A673 (cell line): ENCODE measurements at regions of chr12 and their contacts with region 1.

Region 1: DNA sequence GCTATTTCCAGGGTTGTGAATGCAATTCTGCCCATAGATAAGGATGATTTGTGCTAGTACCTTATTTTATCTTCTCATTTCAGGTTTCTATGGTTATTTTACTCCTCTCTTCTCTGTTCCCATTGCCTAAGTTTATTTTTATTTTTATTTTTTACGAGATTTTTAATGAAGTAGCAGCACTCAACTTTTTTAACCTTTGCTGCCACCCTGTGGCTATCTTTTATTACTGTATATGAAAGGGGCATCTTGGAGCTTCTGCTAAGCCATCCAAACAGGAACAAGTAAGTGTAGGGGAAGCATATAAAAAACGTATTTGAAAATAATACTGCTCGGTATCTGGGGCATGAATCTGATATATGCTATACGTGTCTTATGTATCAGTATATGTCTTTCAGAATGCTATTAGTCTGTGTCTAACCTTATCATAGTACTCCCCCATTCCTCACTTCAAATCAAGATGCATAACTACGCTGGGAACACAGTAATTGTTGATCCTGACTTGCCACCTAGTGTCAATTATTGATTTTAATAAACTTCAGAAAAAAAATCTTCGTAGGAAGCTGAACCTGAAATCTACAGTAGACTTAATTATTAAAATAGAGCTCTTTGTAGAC is 60.3 kb downstream of the KLRG1 start:
- DNase-seq: peak; percentile 59
- H3K4me3 ChIP-seq: no peak overlapping the region
- H3K27ac ChIP-seq: no peak overlapping the region
- H3K4me1 ChIP-seq: no peaks in the 10 kb centered on the region
- H3K27me3 ChIP-seq: no peaks in the 10 kb centered on the region
- CTCF ChIP-seq: peak; percentile 73

Region 2: GRCh38 chr12:8890313-8891085 is 159.1 kb before region 1 on chr12:
- CTCF ChIA-PET with region 1: interaction called, 4 read pairs
- POLR2A ChIA-PET with region 1: no interaction called
- intact Hi-C with region 1: loop called (anchors 10 kb)
- DNase-seq: peak; percentile 72
- H3K4me3 ChIP-seq: peak overlapping the region; percentile 43
- H3K27ac ChIP-seq: no peak overlapping the region
- H3K4me1 ChIP-seq: no peaks in the 10 kb centered on the region
- H3K27me3 ChIP-seq: no peaks in the 10 kb centered on the region
- CTCF ChIP-seq: peak; percentile 94